ENCODE measurements at regions of chr15 and their contacts with region 1.

Region 1: GRCh38 chr15:31488426-31489204 is 162.0 kb downstream of the KLF13 start:
- DNase-seq: peak in 9 of 14 experiments; percentile 16 to 89 (median 33)
- ATAC-seq: peak; percentile 64
- H3K4me3 ChIP-seq: no peak overlapping the region
- H3K4me3 Mint-ChIP-seq: peak overlapping the region; percentile 58
- H3K27ac ChIP-seq: no peak overlapping the region
- H3K27ac Mint-ChIP-seq: no peak overlapping the region
- H3K4me1 ChIP-seq: peaks cover 37% of the 10 kb centered on the region
- H3K4me1 Mint-ChIP-seq: peaks cover 29% of the 10 kb centered on the region
- H3K27me3 ChIP-seq: no peaks in the 10 kb centered on the region
- H3K27me3 Mint-ChIP-seq: no peaks in the 10 kb centered on the region
- CTCF ChIP-seq: peak; percentile 81

Region 2: DNA sequence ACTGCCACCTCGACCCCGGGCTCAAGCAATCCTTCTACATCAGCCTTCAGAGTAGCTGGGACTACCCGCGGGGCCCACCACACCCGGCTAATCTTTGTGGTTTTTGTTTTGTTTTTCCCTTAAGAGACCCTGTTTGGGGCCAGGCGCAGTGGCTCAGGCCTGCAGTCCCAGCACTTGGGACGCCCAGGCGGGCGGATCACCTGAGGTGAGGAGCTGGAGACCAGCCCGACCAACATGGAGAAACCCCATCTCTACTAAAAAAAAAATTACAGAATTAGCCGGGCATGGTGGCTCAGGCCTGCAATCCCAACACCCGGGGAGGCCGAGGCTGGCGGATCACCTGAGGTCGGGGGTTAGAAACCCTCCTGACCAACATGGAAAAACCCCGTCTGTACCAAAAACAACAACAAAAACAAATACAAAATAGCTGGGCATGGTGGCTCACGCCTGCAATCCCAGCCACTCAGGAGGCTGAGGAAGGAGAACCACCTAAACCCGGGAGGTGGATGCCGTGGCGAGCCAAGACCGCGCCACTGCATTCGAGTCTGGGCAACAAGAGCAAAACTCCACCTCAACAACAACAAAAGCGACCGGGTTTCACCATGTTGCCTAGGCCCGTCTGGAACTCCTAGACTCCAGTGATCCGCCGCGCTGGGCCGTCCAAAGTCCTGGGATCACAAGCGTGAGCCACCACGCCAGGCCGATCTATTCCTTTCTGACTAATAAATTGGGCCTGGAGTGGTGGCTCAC is 593.0 kb before region 1 on chr15:
- CTCF ChIA-PET with region 1: no interaction called
- POLR2A ChIA-PET with region 1: no interaction called
- intact Hi-C with region 1: loop called in 1 of 2 experiments (anchors 2 kb)
- DNase-seq: no peak
- ATAC-seq: no peak
- H3K4me3 ChIP-seq: no peak overlapping the region
- H3K4me3 Mint-ChIP-seq: no peak overlapping the region
- H3K27ac ChIP-seq: no peak overlapping the region
- H3K27ac Mint-ChIP-seq: no peak overlapping the region
- H3K4me1 ChIP-seq: no peaks in the 10 kb centered on the region
- H3K4me1 Mint-ChIP-seq: no peaks in the 10 kb centered on the region
- H3K27me3 ChIP-seq: no peaks in the 10 kb centered on the region
- H3K27me3 Mint-ChIP-seq: peaks cover 5% of the 10 kb centered on the region
- CTCF ChIP-seq: no peak

Region 3: DNA sequence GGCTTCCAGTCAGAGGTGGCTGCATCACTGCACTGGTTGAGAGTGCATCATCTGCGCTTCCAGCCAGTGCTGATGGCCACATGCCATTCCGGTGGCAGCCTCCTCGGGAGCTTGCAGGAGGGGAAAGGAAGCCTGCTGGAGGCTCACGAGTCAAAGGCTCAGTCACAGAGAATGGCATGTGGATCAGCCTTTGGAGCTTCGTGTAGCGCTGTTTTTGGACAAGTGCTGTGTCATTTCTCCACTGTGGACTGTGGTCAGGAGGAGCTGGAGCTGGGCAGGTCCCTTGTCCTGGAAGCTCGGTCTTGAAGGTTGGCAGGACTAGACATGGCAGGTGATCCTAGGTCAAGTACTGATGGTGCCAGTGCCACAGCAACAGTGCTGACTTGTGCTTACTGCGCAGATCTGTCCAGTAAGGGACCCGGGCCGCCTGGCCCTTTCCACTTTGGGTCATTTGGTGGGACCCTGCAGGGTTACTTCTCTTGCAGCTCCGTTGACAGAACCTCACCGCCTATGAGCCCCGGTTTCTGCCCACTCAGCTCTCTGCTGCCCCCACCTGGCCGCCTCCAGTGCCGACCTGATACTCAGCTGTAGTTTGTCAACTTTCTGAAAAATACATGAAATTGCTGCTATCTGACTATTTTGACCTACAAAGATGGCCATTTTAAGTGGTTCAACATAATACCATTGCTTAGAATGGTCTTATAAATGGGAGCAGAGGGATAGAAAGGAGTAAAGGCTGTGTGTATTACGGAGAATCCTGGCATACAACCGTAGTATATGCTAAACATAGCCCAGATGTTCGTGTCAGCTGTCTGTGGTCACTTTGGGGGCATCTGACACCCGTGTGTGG is 359.5 kb before region 1 on chr15:
- CTCF ChIA-PET with region 1: no interaction called
- POLR2A ChIA-PET with region 1: no interaction called
- intact Hi-C with region 1: loop called in 1 of 2 experiments (anchors 2 kb)
- DNase-seq: peak; percentile 58 to 85 (median 74)
- ATAC-seq: peak; percentile 86
- H3K4me3 ChIP-seq: no peak overlapping the region
- H3K4me3 Mint-ChIP-seq: no peak overlapping the region
- H3K27ac ChIP-seq: no peak overlapping the region
- H3K27ac Mint-ChIP-seq: no peak overlapping the region
- H3K4me1 ChIP-seq: peaks cover 5% of the 10 kb centered on the region
- H3K4me1 Mint-ChIP-seq: no peaks in the 10 kb centered on the region
- H3K27me3 ChIP-seq: no peaks in the 10 kb centered on the region
- H3K27me3 Mint-ChIP-seq: no peaks in the 10 kb centered on the region
- CTCF ChIP-seq: peak; percentile 82

Region 4: GRCh38 chr15:31215490-31216214 is 273.0 kb before region 1 on chr15:
- CTCF ChIA-PET with region 1: interaction called, 19 read pairs
- POLR2A ChIA-PET with region 1: interaction called, 15 read pairs
- intact Hi-C with region 1: loop called in 1 of 2 experiments (anchors 1 kb)
- DNase-seq: peak; percentile 60 to 86 (median 78)
- ATAC-seq: peak; percentile 69
- H3K4me3 ChIP-seq: peak overlapping the region; percentile 35
- H3K4me3 Mint-ChIP-seq: peak overlapping the region; percentile 70
- H3K27ac ChIP-seq: peak overlapping the region; percentile 55 to 70
- H3K27ac Mint-ChIP-seq: peak overlapping the region; percentile 94
- H3K4me1 ChIP-seq: peaks cover 32% of the 10 kb centered on the region
- H3K4me1 Mint-ChIP-seq: peaks cover 57% of the 10 kb centered on the region
- H3K27me3 ChIP-seq: no peaks in the 10 kb centered on the region
- H3K27me3 Mint-ChIP-seq: no peaks in the 10 kb centered on the region
- CTCF ChIP-seq: peak; percentile 83

Region 5: DNA sequence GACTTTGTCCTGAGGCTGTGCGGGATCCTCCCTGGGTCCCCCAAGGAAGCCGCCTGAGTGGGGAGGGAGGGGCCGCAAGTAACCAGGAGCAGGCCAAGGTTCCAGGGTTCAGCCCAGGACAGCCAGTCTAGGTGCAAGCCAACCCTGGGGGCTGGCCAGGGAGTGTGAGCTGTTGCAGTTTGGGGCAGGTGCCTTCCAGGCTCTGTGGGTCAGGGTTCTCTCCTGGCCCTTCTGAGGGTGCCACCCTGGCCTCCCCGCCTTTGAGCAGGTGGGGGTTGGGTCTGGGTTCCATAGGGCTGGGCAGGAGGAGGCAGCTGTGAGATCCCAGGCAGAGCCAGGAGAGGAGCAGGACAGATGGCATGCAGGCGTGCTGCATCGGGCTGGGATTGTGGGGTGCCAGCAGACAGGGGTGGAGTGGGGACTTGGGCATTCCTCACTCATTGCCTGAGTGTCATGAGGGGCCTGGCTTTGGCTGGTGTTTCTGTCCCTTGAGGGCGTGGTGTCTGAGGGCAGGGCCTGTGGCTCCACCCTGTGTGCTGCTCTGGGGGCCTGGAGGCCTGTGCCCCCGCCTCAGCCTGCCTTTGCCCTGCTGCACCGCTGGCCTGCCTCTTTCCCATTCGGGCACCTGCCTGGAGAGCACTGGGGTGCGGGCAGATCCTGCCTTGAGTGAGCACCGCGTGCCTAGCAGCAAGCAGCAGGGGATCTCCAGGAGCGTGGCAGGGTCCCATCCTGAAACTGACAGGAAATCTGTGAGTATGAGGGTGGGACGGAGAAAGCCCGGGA is 143.6 kb before region 1 on chr15:
- CTCF ChIA-PET with region 1: interaction called, 7 read pairs
- POLR2A ChIA-PET with region 1: interaction called, 5 read pairs
- intact Hi-C with region 1: loop called in 1 of 2 experiments (anchors 5 kb)
- DNase-seq: peak in 3 of 14 experiments; percentile 46 to 50 (median 47)
- ATAC-seq: no peak
- H3K4me3 ChIP-seq: peak overlapping the region; percentile 47
- H3K4me3 Mint-ChIP-seq: peak overlapping the region; percentile 90
- H3K27ac ChIP-seq: peak overlapping the region; percentile 81 to 86
- H3K27ac Mint-ChIP-seq: peak overlapping the region; percentile 90
- H3K4me1 ChIP-seq: peaks cover 100% of the 10 kb centered on the region
- H3K4me1 Mint-ChIP-seq: peaks cover 100% of the 10 kb centered on the region
- H3K27me3 ChIP-seq: no peaks in the 10 kb centered on the region
- H3K27me3 Mint-ChIP-seq: no peaks in the 10 kb centered on the region
- CTCF ChIP-seq: no peak

Region 6: DNA sequence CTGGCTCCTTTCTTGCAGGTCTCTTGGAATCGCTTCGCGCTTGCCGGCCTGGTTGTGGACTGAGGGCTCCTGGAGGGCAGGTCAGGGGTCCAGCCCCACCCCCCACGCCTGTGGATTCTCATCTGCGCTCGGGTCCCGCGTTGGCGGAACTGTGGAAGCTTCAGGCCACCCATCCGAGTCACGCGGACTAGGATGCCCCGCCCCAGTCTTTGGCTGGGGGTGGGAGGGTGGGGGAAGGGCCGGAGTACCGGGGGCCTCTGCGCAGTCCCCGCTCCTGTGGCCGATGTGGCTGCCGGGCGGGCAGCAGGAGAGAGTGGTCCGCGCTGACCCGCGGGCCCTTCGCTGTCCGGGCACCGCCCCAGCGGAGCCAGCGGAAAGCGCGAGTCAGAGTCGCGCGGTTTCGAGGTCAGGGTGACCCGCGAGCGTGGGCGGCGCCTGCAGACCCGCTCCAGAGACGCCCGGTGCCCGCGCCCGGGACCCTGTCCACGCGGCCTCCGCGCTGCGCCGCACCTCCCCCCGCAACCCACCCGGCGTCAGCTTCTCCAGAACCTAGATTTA is 47.8 kb before region 1 on chr15:
- CTCF ChIA-PET with region 1: interaction called, 19 read pairs
- POLR2A ChIA-PET with region 1: interaction called, 56 read pairs
- intact Hi-C with region 1: loop called in 1 of 2 experiments (anchors 2 kb)
- DNase-seq: peak in 9 of 14 experiments; percentile 29 to 69 (median 51)
- ATAC-seq: peak; percentile 45
- H3K4me3 ChIP-seq: peak overlapping the region; percentile 48
- H3K4me3 Mint-ChIP-seq: peak overlapping the region; percentile 75
- H3K27ac ChIP-seq: peak overlapping the region; percentile 25 to 47
- H3K27ac Mint-ChIP-seq: peak overlapping the region; percentile 98
- H3K4me1 ChIP-seq: peaks cover 68% of the 10 kb centered on the region
- H3K4me1 Mint-ChIP-seq: peaks cover 61% of the 10 kb centered on the region
- H3K27me3 ChIP-seq: no peaks in the 10 kb centered on the region
- H3K27me3 Mint-ChIP-seq: no peaks in the 10 kb centered on the region
- CTCF ChIP-seq: no peak